Posterior vena cava (tissue), 2 donors: ENCODE measurements at regions of chr20 and their contacts with region 1.

Region 1: DNA sequence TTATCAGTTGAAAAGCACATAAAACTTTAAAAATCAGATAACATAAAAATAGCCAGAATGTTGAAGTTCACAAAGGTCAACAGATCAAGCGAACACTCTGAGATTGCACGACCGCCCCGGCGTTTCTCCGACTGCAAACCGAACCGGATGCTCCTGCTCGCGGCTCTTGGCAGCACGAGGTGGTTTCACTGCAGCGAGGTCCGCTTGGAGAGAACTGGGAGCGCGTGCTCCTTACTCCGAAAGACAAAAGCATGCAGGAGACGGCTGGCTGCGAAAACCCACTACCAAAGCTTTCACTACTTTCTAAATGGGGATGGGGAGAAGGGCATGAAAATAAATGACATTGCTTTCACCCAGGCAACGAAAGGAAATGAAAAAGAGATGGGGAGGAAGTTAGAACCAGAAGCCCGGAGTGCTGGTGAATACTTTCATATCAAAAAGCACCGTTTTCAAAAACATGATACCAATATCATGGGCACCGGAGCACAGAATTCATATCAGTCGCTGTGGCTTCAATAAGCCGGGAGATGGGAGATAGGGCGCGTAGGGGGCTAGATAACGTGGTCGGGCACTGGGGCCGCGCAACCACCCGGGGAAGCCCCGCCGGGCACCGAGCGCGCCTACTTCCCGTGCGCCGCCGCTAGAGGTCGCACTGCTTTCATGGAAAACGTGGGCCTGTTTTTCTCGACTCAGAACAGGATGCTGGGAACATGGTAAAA is 8.3 kb upstream of the ANKRD60 start:
- DNase-seq: peak; percentile 94

Region 2: DNA sequence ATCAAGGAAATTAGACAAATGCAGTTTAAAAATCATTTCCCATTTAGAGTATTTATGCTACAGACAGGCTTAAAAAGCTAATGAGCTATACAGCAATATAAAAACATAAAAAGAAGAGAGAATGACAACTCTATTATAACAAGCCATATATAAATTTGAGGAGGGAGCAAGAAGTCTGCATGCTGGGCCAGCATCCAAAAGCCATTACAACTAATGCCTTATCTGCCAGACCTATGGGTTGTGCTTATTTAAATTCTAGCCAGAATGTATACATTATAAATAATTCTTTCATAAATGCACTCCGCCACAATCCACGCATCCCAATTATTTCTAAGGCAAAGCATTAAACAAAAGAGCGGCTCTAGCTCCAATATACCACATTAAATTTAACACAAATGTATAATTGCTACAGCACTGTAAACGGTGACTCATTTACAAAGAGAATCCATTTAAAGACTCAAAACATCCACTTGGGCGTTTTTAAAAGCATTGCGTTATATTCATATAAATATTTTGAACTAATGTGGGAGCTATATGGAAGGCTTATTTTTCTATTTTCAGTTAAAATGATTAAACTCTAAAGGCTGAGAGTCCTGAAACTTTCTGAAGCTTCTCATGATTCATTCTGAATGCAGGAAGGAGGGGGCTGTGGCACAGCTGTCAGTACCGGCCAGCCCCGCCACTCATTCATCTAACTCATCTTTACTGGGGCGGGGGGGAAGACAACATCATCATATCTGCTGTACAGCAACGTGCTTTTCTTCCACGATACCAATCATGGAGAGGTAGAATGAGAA is 35.0 kb after region 1 on chr20:
- intact Hi-C with region 1: no loop called
- DNase-seq: no peak

Region 3: GRCh38 chr20:58458180-58459057 is 221.6 kb after region 1 on chr20:
- intact Hi-C with region 1: no loop called
- DNase-seq: no peak

Region 4: DNA sequence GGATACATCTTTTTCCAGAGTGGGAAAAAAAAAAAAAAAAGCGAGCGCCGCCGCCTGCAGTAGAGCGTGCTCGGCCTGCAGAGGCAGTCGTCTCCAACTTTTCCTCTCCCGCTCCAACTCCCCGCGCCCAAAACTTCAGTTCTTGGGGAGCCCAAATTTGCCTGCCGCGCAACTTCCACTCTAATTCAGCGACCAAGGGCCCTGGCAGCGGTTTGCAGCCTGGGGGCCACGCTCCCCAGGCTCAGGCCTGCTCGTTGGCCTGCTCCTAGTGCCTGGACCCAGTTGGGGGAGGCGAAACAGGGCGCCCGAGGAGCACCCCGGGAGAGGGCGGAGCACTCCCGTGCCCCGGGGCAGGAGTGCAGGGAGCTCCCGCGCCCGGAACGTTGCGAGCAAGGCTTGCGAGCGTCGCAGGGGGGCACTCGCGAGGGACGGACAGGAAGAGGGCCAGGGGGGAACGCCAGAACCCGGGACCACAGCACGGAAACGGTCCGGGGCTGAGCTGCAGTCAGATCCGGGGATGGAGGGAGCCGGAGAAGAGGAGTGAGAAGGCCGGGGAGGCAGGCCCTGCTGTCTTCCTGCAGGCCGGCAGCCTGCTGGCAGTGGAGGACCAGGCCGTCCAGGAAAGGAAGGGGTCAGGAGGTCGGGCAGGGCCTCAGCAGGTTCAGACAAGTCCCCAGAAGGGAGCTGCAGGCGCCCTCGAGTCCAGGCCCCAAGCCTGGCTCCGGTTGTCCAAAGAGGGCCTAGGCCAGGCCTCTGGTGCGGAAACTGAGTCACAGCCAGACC is 414.2 kb after region 1 on chr20 and contains the start of gene STX16:
- intact Hi-C with region 1: loop called in 1 of 2 experiments (anchors 5 kb)
- DNase-seq: peak; percentile 97
- total RNA-seq, gene STX16: 38.7 to 41.5 TPM

Region 5: DNA sequence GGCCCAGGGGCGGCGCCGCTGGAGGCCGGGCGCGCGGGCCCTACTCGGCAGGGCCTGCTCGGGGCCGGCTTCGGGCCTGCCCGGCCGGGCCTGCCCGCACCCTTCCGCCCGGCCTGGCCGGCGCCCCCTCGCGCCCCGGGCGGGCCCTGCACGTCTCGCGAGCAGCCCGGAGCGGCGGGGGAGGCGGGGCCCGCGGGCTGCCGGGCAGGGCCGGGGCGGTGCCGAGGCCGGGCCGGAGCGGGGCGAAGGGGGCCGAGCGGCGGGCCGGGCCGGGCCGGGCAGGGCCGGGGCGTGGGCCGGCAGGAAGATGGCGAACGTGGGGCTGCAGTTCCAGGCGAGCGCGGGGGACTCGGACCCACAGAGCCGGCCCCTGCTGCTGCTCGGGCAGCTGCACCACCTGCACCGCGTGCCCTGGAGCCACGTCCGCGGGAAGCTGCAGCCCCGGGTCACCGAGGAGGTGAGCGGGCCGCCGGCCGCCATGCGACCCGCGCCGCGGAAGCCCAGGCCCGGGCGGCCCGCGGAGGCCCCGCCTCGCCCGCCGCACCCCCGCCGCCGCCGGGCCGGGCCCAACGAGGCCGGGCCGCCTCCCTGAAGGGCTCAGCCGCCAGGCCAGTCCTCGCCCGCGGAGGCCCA is 455.9 kb after region 1 on chr20 and contains the start of gene NPEPL1:
- intact Hi-C with region 1: loop called in 1 of 2 experiments (anchors 10 kb)
- DNase-seq: no peak
- total RNA-seq, gene NPEPL1: 28.5 to 31.4 TPM

Region 6: DNA sequence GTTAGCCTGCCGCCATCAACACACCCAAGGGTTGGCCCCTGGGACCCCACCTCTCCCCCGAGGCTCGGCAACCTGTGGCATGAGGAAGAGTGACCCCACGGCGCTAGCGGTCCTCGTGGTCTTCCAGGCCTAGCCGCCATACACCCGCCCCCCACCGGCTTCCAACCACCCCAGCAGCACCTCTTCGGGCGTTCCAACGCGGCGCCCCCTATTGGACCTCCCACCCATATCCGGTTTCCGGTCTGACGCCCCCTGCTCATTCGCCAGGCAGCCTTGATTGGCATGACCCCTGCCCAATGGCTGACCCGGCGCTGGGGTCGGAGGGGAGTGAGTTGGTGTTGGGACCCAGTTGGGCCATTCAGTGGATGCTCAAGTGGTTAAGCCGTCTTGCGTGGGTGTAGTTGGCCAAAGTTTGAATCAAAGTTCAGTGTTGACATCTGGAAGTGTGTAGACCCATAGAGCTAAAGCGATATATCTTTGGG is 614.0 kb after region 1 on chr20 and contains the start of gene GNAS-AS1:
- intact Hi-C with region 1: loop called in 1 of 2 experiments (anchors 10 kb)
- DNase-seq: peak; percentile 86
- total RNA-seq, gene GNAS-AS1: not detected